ENCODE measurements at regions of chr1 and their contacts with region 1.

Region 1: GRCh38 chr1:86470859-86471258 is 2.1 kb downstream of the CLCA1 start:
- DNase-seq: no peak
- H3K4me3 Mint-ChIP-seq: no peak overlapping the region
- H3K27ac Mint-ChIP-seq: no peak overlapping the region
- H3K4me1 Mint-ChIP-seq: no peaks in the 10 kb centered on the region
- H3K27me3 Mint-ChIP-seq: no peaks in the 10 kb centered on the region
- CTCF ChIP-seq: no peak

Region 2: DNA sequence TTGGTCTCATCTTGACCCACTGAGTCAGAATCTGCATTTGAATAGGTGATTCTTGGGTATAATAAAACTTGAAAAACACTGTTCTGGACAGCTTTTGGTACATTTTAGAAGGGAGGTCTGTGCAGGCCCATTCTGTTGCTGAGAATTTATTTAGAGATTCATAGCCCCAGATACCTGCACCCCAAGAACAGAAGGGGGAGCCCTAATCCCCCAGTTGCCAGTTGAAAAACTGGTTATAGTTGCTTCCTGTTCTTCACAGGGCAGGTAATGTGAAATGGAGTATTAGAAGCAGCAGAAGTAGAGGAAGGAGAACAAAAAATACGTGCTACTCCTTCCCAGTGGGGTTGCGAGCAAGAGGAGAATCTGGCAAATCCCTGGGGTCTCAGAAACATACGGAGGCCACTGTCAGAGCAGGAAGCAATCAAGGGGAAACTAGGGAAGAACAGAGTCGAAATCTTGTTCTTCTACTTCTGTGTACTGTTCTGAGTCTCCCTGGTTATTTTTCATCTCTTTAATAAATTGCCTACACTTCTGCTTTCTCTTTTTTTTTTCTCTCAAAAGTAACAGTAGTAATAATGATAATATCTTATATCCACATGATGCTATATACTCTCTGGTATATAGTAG is 51.5 kb before region 1 on chr1:
- CTCF ChIA-PET with region 1: interaction called, 3 read pairs
- POLR2A ChIA-PET with region 1: interaction called, 3 read pairs
- intact Hi-C with region 1: loop called (anchors 1 kb)
- DNase-seq: peak; percentile 73
- H3K4me3 Mint-ChIP-seq: no peak overlapping the region
- H3K27ac Mint-ChIP-seq: peak overlapping the region; percentile 52
- H3K4me1 Mint-ChIP-seq: peaks cover 30% of the 10 kb centered on the region
- H3K27me3 Mint-ChIP-seq: no peaks in the 10 kb centered on the region
- CTCF ChIP-seq: peak; percentile 58

Region 3: DNA sequence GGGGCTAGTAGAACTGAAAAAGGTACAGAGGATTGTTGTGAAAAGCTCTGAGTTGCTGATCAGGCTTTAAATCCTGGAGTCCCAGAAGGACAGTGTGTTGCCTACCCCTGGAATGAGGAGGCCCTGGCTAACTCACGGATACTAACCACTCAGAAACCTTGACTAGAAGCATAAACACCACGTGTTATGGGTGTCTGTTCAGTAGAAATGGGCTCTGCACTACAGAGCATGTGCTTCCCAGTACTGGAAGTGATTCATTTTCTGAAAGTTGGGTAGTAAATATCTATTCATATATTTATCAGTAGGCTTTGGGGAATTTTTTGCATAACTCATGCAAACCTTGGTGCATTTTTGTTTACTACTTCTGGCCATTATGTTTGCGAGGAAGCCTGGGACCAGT is 17.2 kb before region 1 on chr1:
- CTCF ChIA-PET with region 1: interaction called, 10 read pairs
- POLR2A ChIA-PET with region 1: no interaction called
- intact Hi-C with region 1: no loop called
- DNase-seq: no peak
- H3K4me3 Mint-ChIP-seq: no peak overlapping the region
- H3K27ac Mint-ChIP-seq: no peak overlapping the region
- H3K4me1 Mint-ChIP-seq: no peaks in the 10 kb centered on the region
- H3K27me3 Mint-ChIP-seq: no peaks in the 10 kb centered on the region
- CTCF ChIP-seq: no peak

Region 4: GRCh38 chr1:86507935-86508582 is 37.2 kb after region 1 on chr1:
- CTCF ChIA-PET with region 1: interaction called, 77 read pairs
- POLR2A ChIA-PET with region 1: no interaction called
- intact Hi-C with region 1: no loop called
- DNase-seq: peak; percentile 40
- H3K4me3 Mint-ChIP-seq: no peak overlapping the region
- H3K27ac Mint-ChIP-seq: no peak overlapping the region
- H3K4me1 Mint-ChIP-seq: no peaks in the 10 kb centered on the region
- H3K27me3 Mint-ChIP-seq: no peaks in the 10 kb centered on the region
- CTCF ChIP-seq: peak; percentile 45